Heart right ventricle (tissue), 16 donors: ENCODE measurements at regions of chr10 and their contacts with region 1.

Region 1: GRCh38 chr10:79407811-79408795 is 37.3 kb downstream of the ZCCHC24 start:
- DNase-seq: peak in 1 of 2 donors; percentile 51
- ATAC-seq: peak in 7 of 8 donors; percentile 8 to 41 (median 22)
- H3K4me3 ChIP-seq: no peak overlapping the region
- H3K27ac ChIP-seq: peak overlapping the region in 9 of 10 donors; percentile 9 to 88 (median 58)
- H3K4me1 ChIP-seq: peaks cover 0 to 78% (median 0%) of the 10 kb centered on the region in 9 donors
- H3K27me3 ChIP-seq: no peaks in the 10 kb centered on the region
- CTCF ChIP-seq: no peak

Region 2: GRCh38 chr10:78805176-78805575 is 602.9 kb before region 1 on chr10:
- intact Hi-C with region 1: no loop called
- DNase-seq: peak; percentile 77 to 78
- ATAC-seq: peak; percentile 85 to 93 (median 88)
- H3K4me3 ChIP-seq: no peak overlapping the region
- H3K27ac ChIP-seq: peak overlapping the region in 9 of 10 donors; percentile 25 to 89 (median 74)
- H3K4me1 ChIP-seq: peaks cover 20 to 71% (median 46%) of the 10 kb centered on the region in 9 donors
- H3K27me3 ChIP-seq: no peaks in the 10 kb centered on the region
- CTCF ChIP-seq: no peak

Region 3: DNA sequence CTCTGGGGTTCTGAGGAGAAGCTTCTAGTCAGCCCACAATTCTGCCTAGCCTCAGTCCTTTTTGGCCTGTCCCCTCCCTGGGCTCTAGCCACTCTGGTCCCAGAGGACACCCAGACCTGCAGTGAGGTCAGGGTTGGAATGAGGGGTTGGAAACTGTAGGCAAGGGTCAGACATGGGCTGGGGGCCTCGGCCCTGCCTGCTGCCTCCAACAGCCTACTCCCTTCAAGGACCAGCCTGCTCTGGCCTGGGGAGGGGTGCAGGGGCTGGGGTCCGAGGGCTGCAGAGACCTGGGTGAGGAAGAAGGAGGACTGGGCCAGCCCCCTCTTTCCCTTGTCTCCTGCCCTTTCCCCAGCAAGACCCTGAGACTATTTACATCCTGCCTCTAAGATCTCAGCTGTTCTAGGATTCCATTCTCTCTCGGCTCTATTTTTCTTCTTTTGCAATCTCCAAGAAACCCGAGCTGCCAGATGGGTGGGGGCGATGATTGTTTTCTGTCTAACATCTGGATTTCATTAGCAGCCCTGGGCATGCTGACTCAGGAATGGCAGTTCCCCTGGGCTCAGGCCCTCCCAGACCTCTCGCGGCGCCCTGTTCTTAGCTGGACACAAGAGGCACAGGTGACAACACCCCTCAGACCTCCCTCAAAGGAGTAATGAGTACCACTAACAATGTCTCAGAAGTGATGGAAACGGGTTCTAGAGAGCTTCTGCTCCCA is 14.2 kb after region 1 on chr10:
- intact Hi-C with region 1: no loop called
- DNase-seq: peak in 1 of 2 donors; percentile 59
- ATAC-seq: peak in 4 of 8 donors; percentile 8 to 44 (median 39)
- H3K4me3 ChIP-seq: no peak overlapping the region
- H3K27ac ChIP-seq: peak overlapping the region in 8 of 10 donors; percentile 19 to 78 (median 56)
- H3K4me1 ChIP-seq: peaks cover 13 to 83% (median 40%) of the 10 kb centered on the region in 9 donors
- H3K27me3 ChIP-seq: no peaks in the 10 kb centered on the region
- CTCF ChIP-seq: no peak

Region 4: GRCh38 chr10:79434821-79435251 is 26.7 kb after region 1 on chr10:
- intact Hi-C with region 1: loop called in 4 of 10 experiments (anchors 1 to 5 kb)
- DNase-seq: no peak
- ATAC-seq: peak in 1 of 8 donors; percentile 3
- H3K4me3 ChIP-seq: peak overlapping the region in 3 of 10 donors; percentile 10 to 29 (median 26)
- H3K27ac ChIP-seq: peak overlapping the region; percentile 79 to 94 (median 90)
- H3K4me1 ChIP-seq: peaks cover 33 to 98% (median 91%) of the 10 kb centered on the region in 9 donors
- H3K27me3 ChIP-seq: no peaks in the 10 kb centered on the region
- CTCF ChIP-seq: no peak

Region 5: GRCh38 chr10:79445141-79445976 is 37.3 kb after region 1 on chr10 and contains the start of gene ZCCHC24:
- intact Hi-C with region 1: loop called in 5 of 10 experiments (anchors 2 to 5 kb)
- DNase-seq: peak; percentile 99
- ATAC-seq: peak; percentile 93 to 96 (median 95)
- H3K4me3 ChIP-seq: peak within 1 kb of the TSS; percentile 85 to 99 (median 96)
- H3K27ac ChIP-seq: peak within 1 kb of the TSS; percentile 92 to 99 (median 97)
- H3K4me1 ChIP-seq: peaks cover 16 to 51% (median 45%) of the 10 kb centered on the region in 9 donors
- H3K27me3 ChIP-seq: no peaks in the 10 kb centered on the region
- CTCF ChIP-seq: no peak
- total RNA-seq, gene ZCCHC24: 32.0 to 59.0 (median 49.0) TPM